ENCODE measurements at regions of chr4 and their contacts with region 1.

Region 1: GRCh38 chr4:84750253-84750959 is 167.5 kb downstream of the CDS1 start:
- DNase-seq: peak; percentile 30
- ATAC-seq: no peak
- H3K4me3 ChIP-seq: no peak overlapping the region
- H3K4me3 Mint-ChIP-seq: no peak overlapping the region
- H3K27ac ChIP-seq: no peak overlapping the region
- H3K27ac Mint-ChIP-seq: no peak overlapping the region
- H3K4me1 ChIP-seq: no peaks in the 10 kb centered on the region
- H3K4me1 Mint-ChIP-seq: no peaks in the 10 kb centered on the region
- H3K27me3 ChIP-seq: no peaks in the 10 kb centered on the region
- H3K27me3 Mint-ChIP-seq: peaks cover 3% of the 10 kb centered on the region
- CTCF ChIP-seq: peak; percentile 79

Region 2: DNA sequence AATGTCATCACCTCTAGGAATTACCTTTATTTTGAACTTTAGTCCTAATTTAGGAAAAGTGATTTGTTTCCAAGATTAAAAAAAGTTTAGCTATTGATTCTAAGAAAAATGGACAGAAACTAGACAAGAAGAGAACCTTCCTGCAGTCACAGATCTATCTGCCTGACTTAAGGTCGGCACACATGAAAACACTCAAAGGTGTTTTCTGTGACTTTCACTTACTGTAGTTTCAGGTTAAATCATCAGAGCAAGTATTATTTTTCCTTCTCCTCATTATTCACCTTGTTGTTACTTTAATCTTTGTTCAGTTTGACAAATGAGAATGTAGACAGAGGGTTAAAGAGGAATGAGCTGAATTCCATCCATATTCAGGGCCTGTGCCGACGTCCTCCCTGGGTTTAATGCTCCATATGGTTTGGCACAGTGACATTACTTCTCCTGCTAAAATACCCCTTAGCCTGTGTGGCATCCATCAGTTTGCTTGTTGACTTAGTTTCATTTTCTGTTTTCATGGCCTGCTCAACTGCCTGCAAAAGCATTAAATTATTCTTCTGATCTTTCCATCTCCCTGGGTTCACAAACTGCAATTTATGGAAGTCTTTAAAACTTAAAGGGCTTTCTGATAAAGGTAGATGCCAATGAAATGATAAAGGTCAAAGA is 604.0 kb before region 1 on chr4:
- CTCF ChIA-PET with region 1: no interaction called
- POLR2A ChIA-PET with region 1: no interaction called
- intact Hi-C with region 1: no loop called
- DNase-seq: no peak
- ATAC-seq: no peak
- H3K4me3 ChIP-seq: no peak overlapping the region
- H3K4me3 Mint-ChIP-seq: no peak overlapping the region
- H3K27ac ChIP-seq: no peak overlapping the region
- H3K27ac Mint-ChIP-seq: no peak overlapping the region
- H3K4me1 ChIP-seq: no peaks in the 10 kb centered on the region
- H3K4me1 Mint-ChIP-seq: no peaks in the 10 kb centered on the region
- H3K27me3 ChIP-seq: no peaks in the 10 kb centered on the region
- H3K27me3 Mint-ChIP-seq: no peaks in the 10 kb centered on the region
- CTCF ChIP-seq: no peak

Region 3: GRCh38 chr4:84493092-84493850 is 257.1 kb before region 1 on chr4:
- CTCF ChIA-PET with region 1: no interaction called
- POLR2A ChIA-PET with region 1: no interaction called
- intact Hi-C with region 1: no loop called
- DNase-seq: peak; percentile 54
- ATAC-seq: no peak
- H3K4me3 ChIP-seq: no peak overlapping the region
- H3K4me3 Mint-ChIP-seq: peak overlapping the region; percentile 66
- H3K27ac ChIP-seq: no peak overlapping the region
- H3K27ac Mint-ChIP-seq: no peak overlapping the region
- H3K4me1 ChIP-seq: peaks cover 22 to 34% of the 10 kb centered on the region in 2 donors
- H3K4me1 Mint-ChIP-seq: peaks cover 16% of the 10 kb centered on the region
- H3K27me3 ChIP-seq: peaks cover 3 to 80% (median 65%) of the 10 kb centered on the region in 4 experiments
- H3K27me3 Mint-ChIP-seq: peaks cover 62% of the 10 kb centered on the region
- CTCF ChIP-seq: no peak

Region 4: GRCh38 chr4:84681486-84682274 is 68.7 kb before region 1 on chr4:
- CTCF ChIA-PET with region 1: no interaction called
- POLR2A ChIA-PET with region 1: no interaction called
- intact Hi-C with region 1: no loop called
- DNase-seq: no peak
- ATAC-seq: no peak
- H3K4me3 ChIP-seq: no peak overlapping the region
- H3K4me3 Mint-ChIP-seq: no peak overlapping the region
- H3K27ac ChIP-seq: no peak overlapping the region
- H3K27ac Mint-ChIP-seq: no peak overlapping the region
- H3K4me1 ChIP-seq: no peaks in the 10 kb centered on the region
- H3K4me1 Mint-ChIP-seq: no peaks in the 10 kb centered on the region
- H3K27me3 ChIP-seq: no peaks in the 10 kb centered on the region
- H3K27me3 Mint-ChIP-seq: no peaks in the 10 kb centered on the region
- CTCF ChIP-seq: no peak

Region 5: GRCh38 chr4:84740057-84740456 is 10.3 kb before region 1 on chr4:
- CTCF ChIA-PET with region 1: interaction called, 17 read pairs
- POLR2A ChIA-PET with region 1: no interaction called
- intact Hi-C with region 1: no loop called
- DNase-seq: no peak
- ATAC-seq: no peak
- H3K4me3 ChIP-seq: no peak overlapping the region
- H3K4me3 Mint-ChIP-seq: no peak overlapping the region
- H3K27ac ChIP-seq: no peak overlapping the region
- H3K27ac Mint-ChIP-seq: no peak overlapping the region
- H3K4me1 ChIP-seq: no peaks in the 10 kb centered on the region
- H3K4me1 Mint-ChIP-seq: no peaks in the 10 kb centered on the region
- H3K27me3 ChIP-seq: peaks cover 0 to 4% (median 0%) of the 10 kb centered on the region in 4 experiments
- H3K27me3 Mint-ChIP-seq: peaks cover 4% of the 10 kb centered on the region
- CTCF ChIP-seq: no peak

Region 6: DNA sequence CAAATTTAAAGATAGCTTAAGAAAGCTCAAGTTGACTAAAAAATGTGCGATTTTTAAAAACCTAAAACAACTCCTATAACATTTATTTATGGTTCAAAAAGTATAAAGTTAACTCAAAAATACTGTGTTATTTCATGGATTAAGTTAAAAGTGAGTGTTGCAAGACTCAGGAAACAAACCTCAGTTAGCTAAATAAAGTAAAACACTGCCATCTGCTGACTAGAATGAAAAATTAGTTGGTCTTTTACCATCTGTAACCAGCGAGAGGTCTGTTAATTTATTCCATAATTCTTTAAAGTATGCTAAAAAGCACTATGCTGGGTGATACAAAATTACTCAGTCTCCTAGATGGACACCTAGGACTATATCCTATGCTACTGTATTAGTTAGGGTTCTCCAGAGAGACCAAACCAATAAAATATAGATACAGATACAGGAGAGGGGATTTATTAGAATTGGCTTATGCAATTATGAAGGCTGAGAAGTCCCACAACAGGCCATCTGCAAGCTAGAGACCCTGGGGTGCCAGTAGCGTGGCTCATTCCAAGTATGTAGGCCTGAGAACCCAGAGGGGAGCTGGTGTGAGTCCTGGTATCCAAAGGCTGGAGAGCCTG is 221.0 kb after region 1 on chr4:
- CTCF ChIA-PET with region 1: interaction called, 4 read pairs
- POLR2A ChIA-PET with region 1: no interaction called
- intact Hi-C with region 1: loop called (anchors 5 kb)
- DNase-seq: peak; percentile 19
- ATAC-seq: no peak
- H3K4me3 ChIP-seq: no peak overlapping the region
- H3K4me3 Mint-ChIP-seq: no peak overlapping the region
- H3K27ac ChIP-seq: no peak overlapping the region
- H3K27ac Mint-ChIP-seq: no peak overlapping the region
- H3K4me1 ChIP-seq: peaks cover 6 to 9% of the 10 kb centered on the region in 2 donors
- H3K4me1 Mint-ChIP-seq: peaks cover 8% of the 10 kb centered on the region
- H3K27me3 ChIP-seq: peaks cover 0 to 19% (median 8%) of the 10 kb centered on the region in 4 experiments
- H3K27me3 Mint-ChIP-seq: peaks cover 36% of the 10 kb centered on the region
- CTCF ChIP-seq: peak; percentile 60

Measured in B cell (primary cell).